Pancreas (tissue), 10 donors: ENCODE measurements at regions of chr3 and their contacts with region 1.

Region 1: DNA sequence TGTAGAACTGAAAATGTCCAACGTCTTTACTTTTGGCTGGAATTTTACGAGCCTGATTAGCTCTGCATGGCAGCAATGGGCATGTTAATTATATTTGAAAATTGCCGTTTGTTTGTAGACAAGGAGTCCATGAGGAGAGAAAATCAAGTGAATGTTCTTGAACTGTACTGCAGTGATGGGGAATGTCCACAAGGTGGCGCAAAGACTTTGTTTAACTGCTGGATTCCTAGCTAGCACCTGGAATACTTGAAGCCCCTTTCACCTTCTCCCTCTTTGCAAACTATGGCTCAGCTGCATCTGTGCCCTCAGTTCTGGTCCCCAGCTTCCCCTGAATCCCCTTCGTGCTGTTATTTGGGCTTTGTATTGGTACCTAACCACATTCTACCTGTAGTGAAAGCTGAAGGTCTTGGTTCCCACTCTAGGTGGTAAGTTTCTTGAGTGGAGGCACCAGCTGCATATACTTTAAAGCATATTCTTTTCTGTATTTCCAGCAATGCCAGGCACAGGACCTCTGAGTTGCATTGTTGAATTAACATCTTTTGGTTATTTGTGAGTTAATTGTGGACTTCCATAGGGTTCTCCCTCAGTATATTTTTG is 25.3 kb downstream of the EXOG start:
- DNase-seq: peak in 4 of 6 donors; percentile 21 to 73 (median 44)
- ATAC-seq: peak in 3 of 4 donors; percentile 77 to 88 (median 78)
- H3K4me3 ChIP-seq: no peak overlapping the region
- H3K27ac ChIP-seq: no peak overlapping the region
- H3K4me1 ChIP-seq: no peaks in the 10 kb centered on the region
- H3K27me3 ChIP-seq: no peaks in the 10 kb centered on the region
- CTCF ChIP-seq: peak; percentile 75 to 91 (median 84)

Region 2: GRCh38 chr3:38640661-38641452 is 119.4 kb after region 1 on chr3:
- intact Hi-C with region 1: loop called in 1 of 3 experiments (anchors 5 kb)
- DNase-seq: no peak
- ATAC-seq: no peak
- H3K4me3 ChIP-seq: no peak overlapping the region
- H3K27ac ChIP-seq: no peak overlapping the region
- H3K4me1 ChIP-seq: no peaks in the 10 kb centered on the region
- H3K27me3 ChIP-seq: no peaks in the 10 kb centered on the region
- CTCF ChIP-seq: no peak

Region 3: GRCh38 chr3:38651154-38651789 is 129.8 kb after region 1 on chr3:
- intact Hi-C with region 1: loop called in 1 of 3 experiments (anchors 10 kb)
- DNase-seq: peak; percentile 46 to 86 (median 75)
- ATAC-seq: peak; percentile 71 to 87 (median 85)
- H3K4me3 ChIP-seq: no peak overlapping the region
- H3K27ac ChIP-seq: no peak overlapping the region
- H3K4me1 ChIP-seq: peaks cover 5 to 6% (median 6%) of the 10 kb centered on the region in 3 donors
- H3K27me3 ChIP-seq: peaks cover 0 to 23% (median 2%) of the 10 kb centered on the region in 4 donors
- CTCF ChIP-seq: peak; percentile 95 to 97 (median 96)

Region 4: DNA sequence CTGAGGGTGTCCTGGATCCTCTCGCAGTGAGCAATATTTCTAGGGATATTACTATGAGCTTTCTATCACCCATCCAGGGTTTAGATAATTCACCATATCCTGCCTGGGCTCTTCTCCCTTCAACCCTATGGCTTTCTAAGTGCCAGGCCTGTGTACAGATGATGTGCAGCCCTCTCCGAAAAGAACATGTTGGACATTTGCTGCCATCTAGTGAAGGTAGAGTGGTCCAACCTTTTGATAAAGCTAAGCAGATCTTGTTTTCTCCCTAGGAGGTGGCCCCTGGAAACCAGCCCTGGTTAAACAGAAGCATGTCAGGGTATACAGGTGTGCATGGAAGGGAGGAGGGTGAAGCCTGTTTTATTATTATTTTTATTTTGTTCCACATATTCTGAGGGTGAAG is 322.4 kb after region 1 on chr3:
- intact Hi-C with region 1: loop called in 1 of 3 experiments (anchors 10 kb)
- DNase-seq: no peak
- ATAC-seq: peak in 3 of 4 donors; percentile 70 to 71 (median 71)
- H3K4me3 ChIP-seq: no peak overlapping the region
- H3K27ac ChIP-seq: no peak overlapping the region
- H3K4me1 ChIP-seq: no peaks in the 10 kb centered on the region
- H3K27me3 ChIP-seq: no peaks in the 10 kb centered on the region
- CTCF ChIP-seq: no peak

Region 5: GRCh38 chr3:38992117-38992760 is 470.8 kb after region 1 on chr3:
- intact Hi-C with region 1: loop called in 1 of 3 experiments (anchors 10 kb)
- DNase-seq: no peak
- ATAC-seq: no peak
- H3K4me3 ChIP-seq: no peak overlapping the region
- H3K27ac ChIP-seq: no peak overlapping the region
- H3K4me1 ChIP-seq: no peaks in the 10 kb centered on the region
- H3K27me3 ChIP-seq: no peaks in the 10 kb centered on the region
- CTCF ChIP-seq: no peak